ENCODE measurements at regions of chr3 and their contacts with region 1.

Region 1: GRCh38 chr3:8970971-8971589 is 7.8 kb upstream of the RAD18 start:
- DNase-seq: peak; percentile 59 to 67
- H3K4me3 ChIP-seq: no peak overlapping the region
- H3K27ac ChIP-seq: no peak overlapping the region
- H3K4me1 ChIP-seq: no peaks in the 10 kb centered on the region
- H3K27me3 ChIP-seq: no peaks in the 10 kb centered on the region
- CTCF ChIP-seq: peak; percentile 91 to 99 (median 96)
- POLR2A ChIP-seq: no peak

Region 2: GRCh38 chr3:8607234-8608040 is 363.6 kb before region 1 on chr3:
- intact Hi-C with region 1: no loop called
- DNase-seq: peak; percentile 30 to 37
- H3K4me3 ChIP-seq: no peak overlapping the region
- H3K27ac ChIP-seq: no peak overlapping the region
- H3K4me1 ChIP-seq: no peaks in the 10 kb centered on the region
- H3K27me3 ChIP-seq: no peaks in the 10 kb centered on the region
- CTCF ChIP-seq: peak in 3 of 6 experiments; percentile 30 to 46 (median 38)
- POLR2A ChIP-seq: no peak

Region 3: DNA sequence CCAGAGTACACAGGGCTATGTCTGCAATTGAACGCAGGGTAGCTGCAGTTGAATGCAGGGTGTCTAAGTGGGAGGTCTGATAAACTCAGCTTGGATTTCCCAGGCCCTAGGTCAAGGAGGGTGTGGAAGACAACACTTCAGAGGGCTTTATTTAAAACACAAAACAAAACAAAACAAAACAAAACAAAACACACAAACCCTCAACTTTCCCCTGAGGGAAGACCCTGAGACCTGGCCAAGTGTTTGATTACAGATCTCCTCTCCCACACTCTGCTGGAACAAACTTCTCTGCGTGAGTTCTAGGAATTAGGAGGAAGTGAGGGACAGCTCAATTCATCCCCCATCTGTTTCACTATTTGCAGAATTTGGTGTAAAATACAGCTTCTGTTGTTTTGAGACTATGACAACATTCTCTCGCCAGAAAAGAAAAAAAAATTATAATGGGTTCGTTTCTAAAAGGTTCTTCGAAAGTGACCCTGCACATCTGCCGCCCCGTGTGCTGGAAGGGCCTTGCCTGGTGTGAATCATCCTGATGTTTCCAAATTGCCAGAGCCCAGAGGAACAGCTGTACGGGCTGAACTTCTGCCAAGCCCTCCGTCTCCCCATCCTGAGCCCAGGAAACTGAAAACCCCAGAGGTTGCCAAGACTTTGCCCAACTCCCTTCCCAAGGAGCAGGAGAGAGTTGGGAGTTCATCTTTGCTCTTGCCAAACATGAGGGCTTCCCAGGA is 65.5 kb after region 1 on chr3:
- intact Hi-C with region 1: no loop called
- DNase-seq: peak in 1 of 2 donors; percentile 12
- H3K4me3 ChIP-seq: no peak overlapping the region
- H3K27ac ChIP-seq: no peak overlapping the region
- H3K4me1 ChIP-seq: no peaks in the 10 kb centered on the region
- H3K27me3 ChIP-seq: no peaks in the 10 kb centered on the region
- CTCF ChIP-seq: no peak
- POLR2A ChIP-seq: no peak

Region 4: DNA sequence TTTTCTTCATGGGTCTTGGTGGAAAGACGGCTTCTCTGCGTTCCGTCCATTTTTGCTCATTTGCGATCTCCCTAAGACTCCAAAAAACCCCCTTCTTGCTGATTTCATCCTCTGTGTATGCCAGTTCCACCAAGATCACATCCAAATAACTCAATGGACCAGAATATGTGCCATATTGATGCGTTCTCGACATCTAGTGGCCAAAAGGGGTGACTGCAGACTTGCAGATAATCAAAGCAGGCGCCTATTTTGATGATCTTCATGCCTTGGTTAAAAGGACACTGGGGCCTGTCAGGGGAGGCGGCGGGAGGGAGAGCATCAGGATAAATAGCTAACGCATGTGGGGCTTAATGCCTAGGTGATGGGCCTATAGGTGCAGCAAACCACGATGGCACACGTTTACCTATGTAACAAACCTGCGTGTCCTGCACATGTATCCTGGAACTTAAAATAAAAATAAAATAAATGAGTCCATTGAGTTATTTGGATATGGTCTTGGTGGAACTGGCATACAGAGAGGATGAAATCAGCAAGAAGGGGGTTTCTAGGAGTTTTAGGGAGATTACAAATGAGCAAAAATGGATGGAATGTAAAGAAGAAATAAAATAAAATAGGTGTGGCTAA is 96.4 kb after region 1 on chr3:
- intact Hi-C with region 1: loop called (anchors 5 kb)
- DNase-seq: peak; percentile 47 to 57
- H3K4me3 ChIP-seq: no peak overlapping the region
- H3K27ac ChIP-seq: no peak overlapping the region
- H3K4me1 ChIP-seq: no peaks in the 10 kb centered on the region
- H3K27me3 ChIP-seq: no peaks in the 10 kb centered on the region
- CTCF ChIP-seq: peak; percentile 71 to 95 (median 82)
- POLR2A ChIP-seq: no peak

Region 5: DNA sequence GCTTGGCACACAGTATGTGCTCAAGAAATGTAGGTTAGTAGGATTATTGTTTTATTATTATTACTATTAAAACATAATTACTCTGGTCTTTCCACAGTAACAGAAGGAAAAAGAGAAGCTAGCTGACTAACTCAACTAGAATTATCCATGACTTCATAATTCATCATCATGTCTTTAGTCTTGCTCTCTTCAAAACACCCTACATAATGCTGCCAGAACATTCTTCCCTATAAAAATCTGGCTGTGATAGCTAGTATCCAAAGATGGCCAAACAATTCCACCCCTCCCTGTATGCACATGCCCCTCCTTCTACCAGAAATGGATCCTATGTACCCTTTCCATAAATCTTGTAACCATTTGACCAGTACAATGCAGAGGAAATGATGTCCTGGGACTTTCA is 327.2 kb after region 1 on chr3:
- intact Hi-C with region 1: loop called (anchors 2 kb)
- DNase-seq: no peak
- H3K4me3 ChIP-seq: no peak overlapping the region
- H3K27ac ChIP-seq: no peak overlapping the region
- H3K4me1 ChIP-seq: peaks cover 7 to 13% of the 10 kb centered on the region in 2 donors
- H3K27me3 ChIP-seq: no peaks in the 10 kb centered on the region
- CTCF ChIP-seq: no peak
- POLR2A ChIP-seq: no peak